ENCODE measurements at regions of chr6 and their contacts with region 1.

Region 1: DNA sequence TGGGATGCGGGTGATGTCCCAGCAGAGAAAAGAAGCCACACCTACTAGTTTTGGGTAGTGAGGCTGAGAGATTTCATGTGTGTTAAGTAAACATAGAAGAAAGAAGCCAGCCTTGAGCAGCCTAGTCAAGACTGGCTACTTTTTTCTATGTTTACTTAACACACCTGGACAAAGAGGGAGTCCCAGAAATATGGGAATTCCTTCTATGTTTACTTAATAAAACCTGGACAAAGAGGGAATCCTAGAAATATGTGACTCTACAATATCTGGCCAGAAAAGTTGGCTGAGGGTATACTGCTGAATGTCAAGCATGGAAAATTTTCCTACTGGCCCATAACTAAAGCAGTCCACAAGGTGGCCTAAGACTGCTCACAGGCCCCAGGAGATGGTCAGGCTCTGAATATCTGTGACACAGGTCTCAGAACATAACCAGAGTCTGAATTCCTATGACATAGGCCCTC is 578.3 kb upstream of the NRSN1 start:
- DNase-seq: no peak
- H3K4me3 ChIP-seq: no peak overlapping the region
- H3K27ac ChIP-seq: no peak overlapping the region
- H3K4me1 ChIP-seq: no peaks in the 10 kb centered on the region
- H3K27me3 ChIP-seq: no peaks in the 10 kb centered on the region
- CTCF ChIP-seq: no peak

Region 2: GRCh38 chr6:21731411-21732031 is 1816.2 kb before region 1 on chr6:
- intact Hi-C with region 1: no loop called
- DNase-seq: no peak
- H3K4me3 ChIP-seq: no peak overlapping the region
- H3K27ac ChIP-seq: no peak overlapping the region
- H3K4me1 ChIP-seq: peaks cover 0 to 11% (median 4%) of the 10 kb centered on the region in 4 donors
- H3K27me3 ChIP-seq: no peaks in the 10 kb centered on the region
- CTCF ChIP-seq: no peak

Region 3: GRCh38 chr6:23498013-23498412 is 49.7 kb before region 1 on chr6:
- intact Hi-C with region 1: loop called (anchors 2 kb)
- DNase-seq: no peak
- H3K4me3 ChIP-seq: no peak overlapping the region
- H3K27ac ChIP-seq: no peak overlapping the region
- H3K4me1 ChIP-seq: no peaks in the 10 kb centered on the region
- H3K27me3 ChIP-seq: no peaks in the 10 kb centered on the region
- CTCF ChIP-seq: no peak

Region 4: GRCh38 chr6:23511817-23512216 is 35.9 kb before region 1 on chr6:
- intact Hi-C with region 1: no loop called
- DNase-seq: no peak
- H3K4me3 ChIP-seq: no peak overlapping the region
- H3K27ac ChIP-seq: no peak overlapping the region
- H3K4me1 ChIP-seq: no peaks in the 10 kb centered on the region
- H3K27me3 ChIP-seq: no peaks in the 10 kb centered on the region
- CTCF ChIP-seq: no peak